ENCODE measurements at regions of chr2 and their contacts with region 1.

Region 1: DNA sequence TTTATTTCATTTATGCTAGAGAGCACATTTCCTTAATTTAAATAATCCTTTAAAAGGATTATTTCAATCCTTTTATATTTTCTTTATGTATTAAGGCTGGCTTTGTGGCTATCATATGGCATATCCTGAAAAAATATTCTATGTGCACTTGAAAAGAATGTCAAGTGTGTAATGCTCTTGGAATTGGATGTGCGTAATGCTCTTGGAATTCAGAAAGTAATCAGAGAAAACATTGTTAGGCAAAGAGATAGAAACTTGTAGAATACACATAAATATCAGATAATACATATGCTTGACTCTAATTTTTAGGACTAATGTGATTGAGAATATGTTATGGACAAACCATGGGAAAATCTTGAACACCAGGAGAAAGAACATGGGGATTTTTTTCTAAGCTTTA is 197.5 kb upstream of the COL3A1 start:
- DNase-seq: no peak
- ATAC-seq: no peak
- H3K4me3 ChIP-seq: no peak overlapping the region
- H3K27ac ChIP-seq: no peak overlapping the region
- H3K4me1 ChIP-seq: no peaks in the 10 kb centered on the region
- H3K27me3 ChIP-seq: no peaks in the 10 kb centered on the region
- CTCF ChIP-seq: no peak
- POLR2A ChIP-seq: no peak

Region 2: GRCh38 chr2:188529746-188530145 is 246.9 kb before region 1 on chr2:
- intact Hi-C with region 1: loop called in 1 of 10 experiments (anchors 10 kb)
- DNase-seq: no peak
- ATAC-seq: no peak
- H3K4me3 ChIP-seq: no peak overlapping the region
- H3K27ac ChIP-seq: no peak overlapping the region
- H3K4me1 ChIP-seq: peaks cover 0 to 11% (median 0%) of the 10 kb centered on the region in 12 donors
- H3K27me3 ChIP-seq: no peaks in the 10 kb centered on the region
- CTCF ChIP-seq: no peak
- POLR2A ChIP-seq: no peak

Region 3: GRCh38 chr2:188835821-188836220 is 59.2 kb after region 1 on chr2:
- intact Hi-C with region 1: no loop called
- DNase-seq: no peak
- ATAC-seq: peak in 1 of 4 donors; percentile 22
- H3K4me3 ChIP-seq: no peak overlapping the region
- H3K27ac ChIP-seq: no peak overlapping the region
- H3K4me1 ChIP-seq: no peaks in the 10 kb centered on the region
- H3K27me3 ChIP-seq: no peaks in the 10 kb centered on the region
- CTCF ChIP-seq: no peak
- POLR2A ChIP-seq: no peak

Measured in heart left ventricle (tissue), 16 donors.